ENCODE measurements at regions of chr22 and their contacts with region 1.

Region 1: GRCh38 chr22:23281406-23282088 is 101.2 kb downstream of the BCR start:
- DNase-seq: peak; percentile 90 to 94 (median 91)
- H3K4me3 ChIP-seq: no peak overlapping the region
- H3K27ac ChIP-seq: peak overlapping the region; percentile 57 to 63
- H3K4me1 ChIP-seq: peaks cover 0 to 16% (median 7%) of the 10 kb centered on the region in 3 donors
- H3K27me3 ChIP-seq: no peaks in the 10 kb centered on the region
- CTCF ChIP-seq: peak; percentile 95

Region 2: DNA sequence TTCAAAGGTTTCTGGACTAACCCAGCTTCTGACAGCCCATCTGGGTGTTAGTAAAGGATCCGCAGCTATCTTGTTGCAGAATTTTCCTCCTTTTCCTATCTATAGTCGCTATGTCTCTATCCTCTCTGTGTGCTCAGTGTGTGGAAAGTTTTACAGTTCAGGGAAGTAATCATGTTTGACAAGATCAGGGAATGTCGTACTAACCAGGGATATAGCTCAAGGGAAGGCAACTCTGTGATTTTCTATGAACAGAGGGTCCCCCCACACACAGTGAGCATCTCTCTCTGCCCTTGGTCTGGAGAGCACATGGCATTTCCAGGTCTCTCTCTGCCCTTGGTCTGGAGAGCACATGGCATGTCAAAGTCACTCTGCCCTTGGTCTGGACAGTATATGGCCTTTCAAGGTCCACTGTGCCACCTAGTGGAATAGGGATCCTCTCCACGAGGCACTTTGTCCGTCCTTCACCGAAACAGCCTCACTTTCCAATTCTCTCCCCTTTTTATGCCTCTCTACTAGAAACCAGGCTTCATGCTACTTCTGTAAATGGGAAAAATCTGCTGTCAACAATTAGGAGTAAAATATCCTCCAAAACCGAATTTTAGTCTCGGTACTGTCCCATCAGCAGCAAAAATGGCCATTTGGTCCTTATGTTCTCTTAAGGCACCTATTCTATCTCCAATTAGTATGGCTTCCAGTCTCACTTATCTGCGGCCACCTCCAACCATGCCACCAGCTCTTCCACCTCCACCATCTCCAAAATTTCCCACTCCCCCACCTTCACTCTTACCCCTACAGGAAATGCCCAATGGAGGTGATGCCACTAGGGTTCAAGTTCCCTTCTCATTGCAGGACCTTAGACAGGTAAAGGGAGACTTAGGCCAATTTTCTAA is 305.3 kb before region 1 on chr22:
- intact Hi-C with region 1: no loop called
- DNase-seq: no peak
- H3K4me3 ChIP-seq: no peak overlapping the region
- H3K27ac ChIP-seq: no peak overlapping the region
- H3K4me1 ChIP-seq: no peaks in the 10 kb centered on the region
- H3K27me3 ChIP-seq: no peaks in the 10 kb centered on the region
- CTCF ChIP-seq: no peak

Region 3: GRCh38 chr22:23110190-23110913 is 171.2 kb before region 1 on chr22:
- intact Hi-C with region 1: no loop called
- DNase-seq: peak in 3 of 5 donors; percentile 27 to 58 (median 27)
- H3K4me3 ChIP-seq: no peak overlapping the region
- H3K27ac ChIP-seq: no peak overlapping the region
- H3K4me1 ChIP-seq: peaks cover 0 to 8% (median 0%) of the 10 kb centered on the region in 3 donors
- H3K27me3 ChIP-seq: no peaks in the 10 kb centered on the region
- CTCF ChIP-seq: no peak

Region 4: GRCh38 chr22:23178512-23179254 is 102.9 kb before region 1 on chr22:
- intact Hi-C with region 1: loop called (anchors 5 kb)
- DNase-seq: peak; percentile 79 to 85 (median 83)
- H3K4me3 ChIP-seq: peak overlapping the region in 1 of 3 donors; percentile 2
- H3K27ac ChIP-seq: peak overlapping the region; percentile 77 to 85
- H3K4me1 ChIP-seq: peaks cover 0 to 29% (median 22%) of the 10 kb centered on the region in 3 donors
- H3K27me3 ChIP-seq: no peaks in the 10 kb centered on the region
- CTCF ChIP-seq: peak; percentile 92

Region 5: GRCh38 chr22:23419931-23420330 is 138.4 kb after region 1 on chr22:
- intact Hi-C with region 1: no loop called
- DNase-seq: no peak
- H3K4me3 ChIP-seq: no peak overlapping the region
- H3K27ac ChIP-seq: no peak overlapping the region
- H3K4me1 ChIP-seq: no peaks in the 10 kb centered on the region
- H3K27me3 ChIP-seq: no peaks in the 10 kb centered on the region
- CTCF ChIP-seq: no peak

Region 6: DNA sequence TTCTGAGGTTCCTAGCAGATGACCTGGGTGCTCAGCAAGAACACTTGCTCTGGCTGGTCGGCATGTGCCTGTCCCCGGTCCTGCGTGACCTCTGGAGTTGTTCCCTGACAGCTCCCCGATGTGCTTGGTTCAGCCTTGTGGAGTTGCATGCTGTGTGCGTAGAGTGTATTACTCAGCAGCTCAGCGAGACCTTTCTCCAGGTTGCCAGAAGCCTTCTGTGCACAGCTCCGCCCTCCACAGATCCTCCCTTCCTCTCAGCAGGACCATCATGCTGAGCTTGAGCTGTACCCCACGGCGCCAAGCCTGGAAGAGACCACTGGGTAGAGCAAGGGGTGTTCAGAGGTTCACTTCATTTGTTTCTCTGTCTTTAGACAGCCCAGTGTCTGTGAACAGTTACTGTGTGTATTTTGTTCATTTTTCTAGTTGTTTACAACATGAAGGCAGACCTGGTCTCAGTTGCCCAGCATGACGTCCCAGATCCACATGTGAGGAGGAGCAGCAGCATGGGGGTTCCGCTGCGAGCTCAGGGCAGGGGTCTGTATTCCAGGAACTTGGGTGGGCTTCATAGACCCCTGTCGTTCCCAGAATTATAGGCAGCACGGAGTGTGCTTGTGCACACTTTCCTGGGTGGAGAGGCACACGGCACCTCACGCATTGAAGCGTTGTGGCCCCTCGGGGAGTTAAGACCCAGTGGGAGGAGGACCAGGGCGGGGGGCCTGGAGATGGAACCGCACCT is 150.0 kb after region 1 on chr22:
- intact Hi-C with region 1: no loop called
- DNase-seq: no peak
- H3K4me3 ChIP-seq: no peak overlapping the region
- H3K27ac ChIP-seq: no peak overlapping the region
- H3K4me1 ChIP-seq: no peaks in the 10 kb centered on the region
- H3K27me3 ChIP-seq: no peaks in the 10 kb centered on the region
- CTCF ChIP-seq: no peak

Measured in kidney (tissue), 22 donors.